ENCODE measurements at regions of chr16 and their contacts with region 1.

Region 1: DNA sequence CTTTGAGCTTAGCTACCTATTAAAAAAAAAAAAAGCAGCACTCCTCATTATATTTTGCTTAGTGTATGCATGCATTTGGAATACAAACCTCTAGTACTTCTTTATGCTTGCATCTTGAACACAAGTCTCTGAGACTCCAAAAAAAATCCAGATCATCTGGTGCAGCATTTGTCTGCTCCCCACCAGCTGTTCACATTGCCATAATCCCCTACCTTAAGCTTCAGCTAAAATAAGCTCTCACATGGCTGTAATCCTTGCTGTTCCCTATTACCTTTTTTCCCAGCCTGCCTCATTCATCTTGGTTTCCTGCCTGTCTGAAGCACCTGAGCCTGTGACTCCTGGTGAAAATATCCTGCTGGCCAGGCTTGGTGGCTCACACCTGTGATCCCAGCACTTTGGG is 7.5 kb upstream of the NFATC2IP start:
- DNase-seq: no peak
- H3K4me3 ChIP-seq: no peak overlapping the region
- H3K27ac ChIP-seq: no peak overlapping the region
- H3K4me1 ChIP-seq: peaks cover 14% of the 10 kb centered on the region
- H3K27me3 ChIP-seq: no peaks in the 10 kb centered on the region
- CTCF ChIP-seq: no peak
- POLR2A ChIP-seq: no peak

Region 2: GRCh38 chr16:28823872-28824716 is 119.2 kb before region 1 on chr16:
- intact Hi-C with region 1: loop called (anchors 10 kb)
- DNase-seq: peak in 1 of 2 donors; percentile 97
- H3K4me3 ChIP-seq: peak overlapping the region; percentile 99
- H3K27ac ChIP-seq: peak overlapping the region; percentile 99
- H3K4me1 ChIP-seq: peaks cover 24% of the 10 kb centered on the region
- H3K27me3 ChIP-seq: no peaks in the 10 kb centered on the region
- CTCF ChIP-seq: peak in 1 of 3 experiments; percentile 32
- POLR2A ChIP-seq: peak in 1 of 2 donors; percentile 14